Heart right ventricle (tissue), 16 donors: ENCODE measurements at regions of chr1 and their contacts with region 1.

Region 1: DNA sequence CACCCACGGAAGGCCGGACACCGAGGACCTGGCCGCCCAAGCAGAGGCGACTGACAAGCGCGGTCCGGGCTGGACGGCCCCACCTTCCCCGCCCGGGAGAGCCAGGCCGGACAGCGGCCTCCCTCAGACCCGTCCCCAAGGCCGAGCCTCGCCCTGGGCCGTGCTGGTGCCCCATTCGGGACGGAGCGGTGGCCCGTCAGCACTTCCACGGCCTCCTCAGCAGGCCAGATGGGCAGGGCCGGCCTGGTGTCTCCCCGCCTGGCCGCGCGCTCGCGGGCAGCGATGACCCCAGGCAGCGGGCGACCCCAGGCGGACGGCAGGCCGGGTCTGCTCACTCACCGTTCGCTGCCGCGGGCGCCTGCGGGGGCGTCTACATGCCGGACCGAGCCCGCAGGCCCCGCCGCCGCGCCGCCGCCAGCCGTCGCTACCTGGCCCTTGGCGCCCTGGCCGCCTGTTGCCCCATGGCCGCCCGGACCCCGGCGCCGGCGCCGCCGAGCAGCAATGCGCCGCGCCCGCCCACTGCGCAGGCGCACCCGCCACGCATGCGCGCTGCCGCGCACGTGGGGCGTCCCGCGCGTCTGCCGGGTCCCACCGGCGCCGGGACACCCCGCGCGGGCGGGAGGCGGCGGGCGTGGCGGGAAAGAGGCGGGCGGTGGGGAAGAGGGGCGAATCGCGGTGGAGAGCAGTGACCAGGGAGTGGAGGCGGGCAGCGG is at the start of gene NADK:
- DNase-seq: peak; percentile 42 to 74
- ATAC-seq: peak; percentile 23 to 77 (median 51)
- H3K4me3 ChIP-seq: peak within 1 kb of the TSS; percentile 66 to 96 (median 88)
- H3K27ac ChIP-seq: peak within 1 kb of the TSS; percentile 89 to 99 (median 94)
- H3K4me1 ChIP-seq: peaks cover 29 to 81% (median 75%) of the 10 kb centered on the region in 9 donors
- H3K27me3 ChIP-seq: no peaks in the 10 kb centered on the region
- CTCF ChIP-seq: peak in 1 of 9 donors; percentile 21
- total RNA-seq, gene NADK: 15.2 to 40.2 (median 21.9) TPM

Region 2: GRCh38 chr1:1441002-1441888 is 336.9 kb before region 1 on chr1:
- intact Hi-C with region 1: no loop called
- DNase-seq: peak in 1 of 2 donors; percentile 72
- ATAC-seq: peak; percentile 68 to 85 (median 77)
- H3K4me3 ChIP-seq: peak overlapping the region in 1 of 10 donors; percentile 21
- H3K27ac ChIP-seq: no peak overlapping the region
- H3K4me1 ChIP-seq: peaks cover 8 to 32% (median 19%) of the 10 kb centered on the region in 9 donors
- H3K27me3 ChIP-seq: peaks cover 0 to 24% (median 4%) of the 10 kb centered on the region in 7 donors
- CTCF ChIP-seq: peak; percentile 80 to 95 (median 90)

Region 3: GRCh38 chr1:1763657-1764616 is 14.2 kb before region 1 on chr1:
- intact Hi-C with region 1: loop called in 1 of 10 experiments (anchors 2 kb)
- DNase-seq: no peak
- ATAC-seq: peak; percentile 38 to 82 (median 55)
- H3K4me3 ChIP-seq: no peak overlapping the region
- H3K27ac ChIP-seq: peak overlapping the region in 1 of 10 donors; percentile 6
- H3K4me1 ChIP-seq: peaks cover 0 to 50% (median 8%) of the 10 kb centered on the region in 9 donors
- H3K27me3 ChIP-seq: no peaks in the 10 kb centered on the region
- CTCF ChIP-seq: peak in 1 of 9 donors; percentile 31

Region 4: GRCh38 chr1:1858382-1859086 is 80.4 kb after region 1 on chr1:
- intact Hi-C with region 1: loop called in 1 of 10 experiments (anchors 5 kb)
- DNase-seq: peak; percentile 67 to 95
- ATAC-seq: peak; percentile 87 to 94 (median 90)
- H3K4me3 ChIP-seq: peak overlapping the region in 7 of 10 donors; percentile 19 to 48 (median 34)
- H3K27ac ChIP-seq: peak overlapping the region; percentile 73 to 87 (median 82)
- H3K4me1 ChIP-seq: peaks cover 32 to 96% (median 83%) of the 10 kb centered on the region in 9 donors
- H3K27me3 ChIP-seq: no peaks in the 10 kb centered on the region
- CTCF ChIP-seq: peak in 7 of 9 donors; percentile 40 to 82 (median 54)

Region 5: DNA sequence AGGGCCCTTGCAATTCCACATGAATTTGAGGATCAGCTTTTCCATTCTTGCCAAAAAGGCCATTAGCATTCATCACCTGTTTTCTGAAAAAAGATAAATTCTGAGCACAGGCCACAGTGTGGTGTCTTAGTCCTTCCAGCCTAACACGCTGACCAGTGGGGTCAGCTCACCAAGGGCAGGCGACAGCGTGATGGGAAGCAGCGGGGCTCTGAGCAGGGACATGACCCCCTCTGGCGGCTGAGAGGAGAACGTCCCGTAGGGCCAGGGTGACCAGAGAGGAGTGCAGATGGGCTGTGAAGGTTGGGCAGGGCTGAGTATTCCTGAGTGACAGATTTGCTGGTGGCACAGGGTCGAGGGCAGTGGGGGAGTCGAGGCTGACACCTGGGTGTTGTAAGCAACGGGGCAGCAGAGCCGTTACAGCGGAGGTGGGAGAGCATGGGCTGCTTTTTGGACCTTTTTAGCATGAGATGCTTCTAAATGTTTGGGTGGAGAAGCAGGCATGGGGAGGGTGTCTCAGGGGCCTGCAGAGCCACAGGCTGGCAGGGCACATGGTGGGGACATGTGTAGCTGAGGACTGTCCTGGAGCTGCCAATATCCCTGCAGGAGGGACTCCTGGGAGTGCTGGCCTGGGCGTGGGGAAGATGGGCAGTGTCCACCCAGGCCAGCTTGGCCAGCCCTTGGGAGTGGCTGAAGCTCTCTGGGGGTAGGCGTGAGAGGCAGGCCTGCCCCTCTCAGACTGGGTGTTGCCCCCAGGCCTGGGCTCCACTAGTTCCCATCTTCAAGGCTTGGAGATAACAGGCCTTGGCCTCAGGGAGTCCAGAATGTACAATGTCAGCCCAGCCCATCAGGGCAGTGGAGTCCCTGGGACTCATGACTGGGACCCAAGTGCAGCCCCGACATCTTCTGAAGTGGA is 128.3 kb after region 1 on chr1:
- intact Hi-C with region 1: loop called in 6 of 10 experiments (anchors 5 to 10 kb)
- DNase-seq: peak; percentile 87 to 88
- ATAC-seq: peak; percentile 60 to 85 (median 76)
- H3K4me3 ChIP-seq: no peak overlapping the region
- H3K27ac ChIP-seq: peak overlapping the region in 8 of 10 donors; percentile 18 to 74 (median 64)
- H3K4me1 ChIP-seq: peaks cover 4 to 38% (median 24%) of the 10 kb centered on the region in 9 donors
- H3K27me3 ChIP-seq: no peaks in the 10 kb centered on the region
- CTCF ChIP-seq: peak; percentile 90 to 96 (median 93)